T-cell (primary cell): ENCODE measurements at regions of chr15 and their contacts with region 1.

Region 1: DNA sequence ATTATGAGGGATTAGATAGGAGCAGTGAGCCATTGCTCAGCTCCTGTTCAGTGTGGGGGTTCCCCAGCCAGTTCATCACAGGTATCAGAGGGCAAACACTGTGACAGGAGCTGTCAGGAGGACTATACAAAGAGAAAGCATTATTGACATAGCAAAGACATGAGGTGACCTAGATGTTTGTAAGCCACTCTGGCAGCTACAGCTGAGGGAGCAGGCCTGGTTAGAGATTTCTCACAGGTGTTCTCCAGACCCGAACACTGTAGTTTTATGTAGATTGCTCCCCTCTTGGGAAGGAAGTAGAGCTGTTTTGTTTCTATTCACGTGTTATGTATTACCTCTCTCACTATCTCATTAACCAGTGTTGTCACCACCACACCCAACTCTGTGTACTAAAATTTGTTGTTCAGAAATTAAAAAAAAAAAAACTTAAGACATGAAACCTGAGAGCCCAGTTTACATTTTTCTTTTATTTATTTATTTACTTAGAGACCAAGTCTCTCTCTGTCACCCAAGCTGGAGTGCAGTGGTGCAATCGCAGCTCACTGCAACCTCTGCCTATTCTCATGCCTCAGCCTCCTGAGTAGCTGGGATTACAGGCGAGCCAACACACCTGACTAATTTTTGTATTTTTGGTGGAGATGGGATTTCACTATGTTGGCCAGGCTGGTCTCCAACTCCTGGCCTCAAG is 123.7 kb downstream of the RBPMS2 start:
- DNase-seq: peak in 34 of 35 experiments; percentile 14 to 74 (median 38)
- ATAC-seq: peak; percentile 89 to 96 (median 92)
- H3K4me3 ChIP-seq: peak overlapping the region in 1 of 2 donors; percentile 25
- H3K4me3 Mint-ChIP-seq: peak overlapping the region; percentile 21 to 67 (median 21)
- H3K27ac ChIP-seq: peak overlapping the region; percentile 78
- H3K27ac Mint-ChIP-seq: peak overlapping the region; percentile 88 to 95
- H3K4me1 ChIP-seq: peaks cover 23 to 28% of the 10 kb centered on the region in 2 experiments
- H3K4me1 Mint-ChIP-seq: peaks cover 49 to 63% (median 50%) of the 10 kb centered on the region in 3 donors
- H3K27me3 ChIP-seq: no peaks in the 10 kb centered on the region
- H3K27me3 Mint-ChIP-seq: no peaks in the 10 kb centered on the region

Region 2: DNA sequence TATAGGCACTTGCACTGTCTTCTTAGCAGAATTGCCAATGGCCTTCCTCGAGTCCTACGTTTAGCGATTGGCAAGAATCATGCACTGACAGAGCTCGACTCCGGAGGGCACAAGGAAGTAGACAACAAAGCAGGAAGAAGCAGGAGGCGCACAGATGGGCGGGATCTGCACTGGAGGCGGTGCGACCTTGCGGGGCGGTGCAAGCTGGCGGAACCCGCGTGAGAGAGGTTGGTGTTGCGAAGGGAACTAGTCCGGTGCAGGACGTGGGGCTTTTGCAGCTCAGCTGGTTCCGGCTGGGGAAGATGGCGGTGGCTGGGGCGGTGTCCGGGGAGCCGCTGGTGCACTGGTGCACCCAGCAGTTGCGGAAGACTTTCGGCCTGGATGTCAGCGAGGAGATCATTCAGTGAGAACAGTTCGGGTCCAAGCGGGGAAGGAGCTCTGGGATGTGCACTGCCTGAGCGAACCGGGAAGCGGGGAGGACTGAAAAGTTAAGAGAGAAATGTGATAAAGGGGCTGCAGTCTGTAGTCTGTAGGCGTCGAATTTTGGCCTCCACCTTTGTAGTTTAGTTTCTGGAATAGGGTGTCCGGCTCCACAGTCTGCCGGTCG is 264.1 kb before region 1 on chr15 and contains the start of gene TRIP4:
- CTCF ChIA-PET with region 1: interaction called, 4 to 14 read pairs
- POLR2A ChIA-PET with region 1: no interaction called
- DNase-seq: peak; percentile 93 to 98 (median 95)
- ATAC-seq: peak; percentile 98 to 100 (median 100)
- H3K4me3 ChIP-seq: peak within 1 kb of the TSS; percentile 88 to 92
- H3K4me3 Mint-ChIP-seq: peak within 1 kb of the TSS; percentile 89 to 99 (median 95)
- H3K27ac ChIP-seq: peak within 1 kb of the TSS; percentile 55
- H3K27ac Mint-ChIP-seq: peak within 1 kb of the TSS; percentile 92 to 94
- H3K4me1 ChIP-seq: peaks cover 9 to 20% of the 10 kb centered on the region in 2 experiments
- H3K4me1 Mint-ChIP-seq: peaks cover 19 to 24% (median 22%) of the 10 kb centered on the region in 3 donors
- H3K27me3 ChIP-seq: no peaks in the 10 kb centered on the region
- H3K27me3 Mint-ChIP-seq: no peaks in the 10 kb centered on the region
- total RNA-seq, gene TRIP4: 17.3 to 24.5 (median 21.7) TPM

Region 3: GRCh38 chr15:64430000-64430735 is 221.5 kb before region 1 on chr15:
- CTCF ChIA-PET with region 1: interaction called, 3 to 13 read pairs
- POLR2A ChIA-PET with region 1: interaction called in 1 of 2 experiments, 3 read pairs
- DNase-seq: peak in 34 of 35 experiments; percentile 15 to 81 (median 50)
- ATAC-seq: peak; percentile 86 to 96 (median 94)
- H3K4me3 ChIP-seq: no peak overlapping the region
- H3K4me3 Mint-ChIP-seq: peak overlapping the region; percentile 58 to 65 (median 62)
- H3K27ac ChIP-seq: peak overlapping the region; percentile 74
- H3K27ac Mint-ChIP-seq: peak overlapping the region; percentile 92 to 95
- H3K4me1 ChIP-seq: peaks cover 34 to 38% of the 10 kb centered on the region in 2 experiments
- H3K4me1 Mint-ChIP-seq: peaks cover 43 to 58% (median 49%) of the 10 kb centered on the region in 3 donors
- H3K27me3 ChIP-seq: no peaks in the 10 kb centered on the region
- H3K27me3 Mint-ChIP-seq: no peaks in the 10 kb centered on the region

Region 4: GRCh38 chr15:64634576-64635498 is 16.9 kb before region 1 on chr15:
- CTCF ChIA-PET with region 1: interaction called in 1 of 2 experiments, 10 read pairs
- POLR2A ChIA-PET with region 1: interaction called, 3 to 15 read pairs
- DNase-seq: peak in 19 of 35 experiments; percentile 6 to 56 (median 14)
- ATAC-seq: peak in 2 of 4 experiments; percentile 38 to 73
- H3K4me3 ChIP-seq: peak overlapping the region in 1 of 2 donors; percentile 17
- H3K4me3 Mint-ChIP-seq: peak overlapping the region; percentile 22 to 71 (median 57)
- H3K27ac ChIP-seq: peak overlapping the region; percentile 66
- H3K27ac Mint-ChIP-seq: peak overlapping the region; percentile 74 to 80
- H3K4me1 ChIP-seq: peaks cover 38 to 52% of the 10 kb centered on the region in 2 experiments
- H3K4me1 Mint-ChIP-seq: peaks cover 60 to 76% (median 73%) of the 10 kb centered on the region in 3 donors
- H3K27me3 ChIP-seq: no peaks in the 10 kb centered on the region
- H3K27me3 Mint-ChIP-seq: no peaks in the 10 kb centered on the region